ENCODE measurements at regions of chr7 and their contacts with region 1.

Region 1: DNA sequence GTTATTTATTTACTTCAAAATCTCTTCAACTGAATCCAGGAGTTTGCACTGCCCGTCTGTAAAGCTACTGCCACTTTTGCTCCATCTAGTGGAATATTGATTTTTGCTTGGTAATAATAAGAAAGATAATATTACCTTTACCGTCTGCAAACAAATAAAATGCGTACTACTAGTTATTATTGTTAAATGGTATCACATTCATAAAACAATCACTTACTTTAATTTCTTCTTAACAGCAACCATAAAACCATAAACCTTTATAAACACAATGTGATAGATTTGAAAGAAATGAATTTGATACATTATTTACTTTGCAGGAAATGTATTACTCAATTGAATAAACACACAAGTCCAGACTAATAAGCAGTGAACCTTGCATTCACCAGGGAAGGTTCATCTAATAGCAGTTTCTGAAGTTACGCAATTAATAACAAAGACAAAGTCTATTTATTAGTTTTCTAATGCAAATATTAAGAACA is 6.4 kb downstream of the AGMO start:
- DNase-seq: no peak

Region 2: DNA sequence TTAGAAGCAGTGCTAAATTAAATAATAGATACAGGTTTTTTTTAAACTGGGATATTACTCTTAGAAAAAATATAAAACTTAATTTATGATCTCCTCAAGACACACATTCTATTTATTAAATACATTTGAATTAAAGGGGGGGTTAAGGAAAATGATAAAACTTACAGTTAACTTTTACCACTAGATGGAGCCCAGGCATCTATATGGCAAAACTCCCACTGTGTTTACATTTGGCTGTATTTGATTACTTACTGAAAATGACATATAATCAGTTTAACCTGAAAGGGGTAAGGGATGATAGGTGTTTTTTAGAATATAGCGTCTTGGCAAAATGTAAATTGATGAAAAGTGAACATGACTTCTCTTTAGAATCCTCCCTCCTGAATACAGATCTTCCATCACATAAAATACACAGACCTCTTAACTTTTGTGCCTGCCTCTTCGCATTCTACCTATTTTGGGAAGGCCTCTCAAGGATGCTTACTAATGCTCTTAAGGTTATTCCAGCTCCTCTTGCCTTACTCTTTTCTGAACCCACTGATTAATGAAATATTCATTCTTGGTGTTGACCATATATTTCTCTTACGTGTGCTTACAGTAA is 229.3 kb before region 1 on chr7:
- intact Hi-C with region 1: loop called (anchors 5 kb)
- DNase-seq: no peak

Region 3: DNA sequence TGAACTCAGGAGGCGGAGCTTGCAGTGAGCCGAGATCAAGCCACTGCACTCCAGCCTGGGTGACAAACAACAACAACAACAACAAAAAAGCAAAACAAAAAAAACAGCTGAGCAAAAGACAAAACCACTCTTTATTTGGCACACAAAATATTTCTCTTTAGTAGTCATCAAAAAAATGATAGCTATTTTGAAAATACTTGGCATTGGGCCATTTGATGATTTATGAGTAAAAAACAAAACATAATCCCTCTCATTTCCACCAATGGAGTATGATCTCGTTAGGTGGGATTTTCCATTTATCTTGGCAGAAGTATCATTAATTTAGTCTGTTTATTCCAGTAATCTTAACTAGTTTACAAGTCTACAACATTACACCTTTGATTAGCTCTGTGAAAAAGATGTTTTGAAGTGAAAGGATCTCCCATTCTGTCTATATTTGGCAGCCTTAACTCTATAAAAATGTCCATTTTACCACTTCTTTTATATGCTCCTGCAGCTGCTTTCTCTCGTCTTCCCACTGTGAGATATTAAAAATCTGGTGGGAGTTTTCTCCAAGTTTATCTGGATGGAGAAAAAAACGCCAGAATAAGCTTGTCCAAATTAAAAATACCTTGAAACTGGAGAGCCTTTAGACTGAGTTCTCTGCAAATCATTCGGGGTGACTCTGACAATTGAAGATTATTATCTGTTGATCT is 65.2 kb after region 1 on chr7:
- intact Hi-C with region 1: no loop called
- DNase-seq: no peak

Region 4: GRCh38 chr7:15686295-15686956 is 131.0 kb after region 1 on chr7 and contains the start of gene MEOX2:
- intact Hi-C with region 1: loop called (anchors 2 kb)
- DNase-seq: peak; percentile 88
- total RNA-seq, gene MEOX2: 6.9 TPM

Measured in cardiac septum (tissue), 1 donor.